ENCODE measurements at regions of chr15 and their contacts with region 1.

Region 1: GRCh38 chr15:56821721-56822425 is 88.6 kb upstream of the ZNF280D start:
- DNase-seq: peak; percentile 79
- H3K4me3 Mint-ChIP-seq: no peak overlapping the region
- H3K27ac Mint-ChIP-seq: no peak overlapping the region
- H3K4me1 Mint-ChIP-seq: peaks cover 28% of the 10 kb centered on the region
- H3K27me3 Mint-ChIP-seq: no peaks in the 10 kb centered on the region
- CTCF ChIP-seq: peak; percentile 80

Region 2: GRCh38 chr15:56732921-56733797 is 88.7 kb before region 1 on chr15 and contains the start of gene ZNF280D:
- CTCF ChIA-PET with region 1: no interaction called
- intact Hi-C with region 1: loop called (anchors 5 kb)
- DNase-seq: peak; percentile 88
- H3K4me3 Mint-ChIP-seq: peak within 1 kb of the TSS; percentile 93
- H3K27ac Mint-ChIP-seq: peak within 1 kb of the TSS; percentile 94
- H3K4me1 Mint-ChIP-seq: peaks cover 9% of the 10 kb centered on the region
- H3K27me3 Mint-ChIP-seq: no peaks in the 10 kb centered on the region
- CTCF ChIP-seq: no peak
- total RNA-seq, gene ZNF280D: 36.0 and 40.3 TPM in 2 replicates

Region 3: GRCh38 chr15:57138349-57138788 is 316.5 kb after region 1 on chr15:
- CTCF ChIA-PET with region 1: interaction called, 4 read pairs
- intact Hi-C with region 1: loop called (anchors 10 kb)
- DNase-seq: peak; percentile 59
- H3K4me3 Mint-ChIP-seq: no peak overlapping the region
- H3K27ac Mint-ChIP-seq: no peak overlapping the region
- H3K4me1 Mint-ChIP-seq: peaks cover 5% of the 10 kb centered on the region
- H3K27me3 Mint-ChIP-seq: no peaks in the 10 kb centered on the region
- CTCF ChIP-seq: peak; percentile 79

Region 4: GRCh38 chr15:57213862-57214261 is 392.0 kb after region 1 on chr15:
- CTCF ChIA-PET with region 1: interaction called, 4 read pairs
- intact Hi-C with region 1: loop called (anchors 1 kb)
- DNase-seq: no peak
- H3K4me3 Mint-ChIP-seq: no peak overlapping the region
- H3K27ac Mint-ChIP-seq: peak overlapping the region; percentile 25
- H3K4me1 Mint-ChIP-seq: peaks cover 50% of the 10 kb centered on the region
- H3K27me3 Mint-ChIP-seq: no peaks in the 10 kb centered on the region
- CTCF ChIP-seq: no peak

Region 5: GRCh38 chr15:57306161-57306943 is 484.5 kb after region 1 on chr15:
- CTCF ChIA-PET with region 1: interaction called, 3 read pairs
- intact Hi-C with region 1: loop called (anchors 5 kb)
- DNase-seq: peak; percentile 97
- H3K4me3 Mint-ChIP-seq: peak overlapping the region; percentile 69
- H3K27ac Mint-ChIP-seq: no peak overlapping the region
- H3K4me1 Mint-ChIP-seq: peaks cover 8% of the 10 kb centered on the region
- H3K27me3 Mint-ChIP-seq: no peaks in the 10 kb centered on the region
- CTCF ChIP-seq: peak; percentile 97

Region 6: GRCh38 chr15:57340682-57341259 is 518.9 kb after region 1 on chr15:
- CTCF ChIA-PET with region 1: no interaction called
- intact Hi-C with region 1: loop called (anchors 10 kb)
- DNase-seq: peak; percentile 76
- H3K4me3 Mint-ChIP-seq: no peak overlapping the region
- H3K27ac Mint-ChIP-seq: no peak overlapping the region
- H3K4me1 Mint-ChIP-seq: peaks cover 25% of the 10 kb centered on the region
- H3K27me3 Mint-ChIP-seq: no peaks in the 10 kb centered on the region
- CTCF ChIP-seq: peak; percentile 86

Measured in Calu3 (cell line).